RWPE1 (cell line): ENCODE measurements at regions of chr5 and their contacts with region 1.

Region 1: DNA sequence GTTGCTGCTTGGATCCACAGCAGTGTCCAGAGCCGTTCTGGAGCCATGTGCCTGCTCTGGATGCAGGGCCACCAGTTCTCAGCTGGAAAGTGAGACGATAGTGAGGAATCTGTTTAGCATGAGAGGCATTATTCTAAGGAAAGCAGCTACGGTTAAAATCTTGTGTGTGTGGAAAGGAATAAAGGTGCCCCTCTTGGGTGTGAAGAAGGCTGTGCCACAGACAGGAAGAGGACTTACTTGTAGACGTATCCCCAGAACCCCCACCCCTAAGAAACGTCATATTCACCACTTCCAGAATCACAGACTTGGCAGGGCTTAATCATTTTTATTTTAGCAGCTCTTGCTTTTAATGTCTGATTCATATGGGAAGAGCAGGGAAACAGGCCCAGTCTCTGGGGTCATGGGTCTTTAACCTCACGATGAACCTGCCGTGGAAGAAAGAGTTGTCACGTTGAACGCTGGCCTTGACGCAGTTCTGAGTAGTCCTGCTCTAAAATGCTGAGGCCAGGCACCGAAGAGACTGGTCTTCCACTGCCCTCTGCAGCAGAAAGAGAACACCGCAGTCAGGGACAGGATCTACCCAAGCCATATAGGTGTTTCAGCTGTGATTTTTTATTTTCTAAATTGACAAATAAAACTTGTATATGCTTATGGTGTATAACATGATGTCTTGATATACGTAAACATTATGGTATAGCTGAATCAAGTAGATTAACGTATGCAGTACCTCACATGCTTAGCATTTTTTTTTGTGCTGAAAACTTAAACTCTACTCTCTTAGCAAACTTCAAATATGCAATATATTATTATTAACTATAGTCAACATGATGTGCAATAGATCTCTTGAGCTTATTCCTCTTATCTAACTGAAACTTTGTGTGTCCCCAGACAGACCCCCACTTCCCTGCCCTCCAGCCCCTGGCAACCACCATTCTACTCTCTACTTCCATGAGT is 38.8 kb downstream of the CARTPT start:
- DNase-seq: peak; percentile 73
- H3K27ac ChIP-seq: no peak overlapping the region
- CTCF ChIP-seq: peak; percentile 93

Region 2: GRCh38 chr5:71475788-71476384 is 282.0 kb before region 1 on chr5:
- CTCF ChIA-PET with region 1: interaction called, 15 read pairs
- POLR2A ChIA-PET with region 1: no interaction called
- DNase-seq: peak; percentile 57
- H3K27ac ChIP-seq: no peak overlapping the region
- CTCF ChIP-seq: peak; percentile 73

Region 3: DNA sequence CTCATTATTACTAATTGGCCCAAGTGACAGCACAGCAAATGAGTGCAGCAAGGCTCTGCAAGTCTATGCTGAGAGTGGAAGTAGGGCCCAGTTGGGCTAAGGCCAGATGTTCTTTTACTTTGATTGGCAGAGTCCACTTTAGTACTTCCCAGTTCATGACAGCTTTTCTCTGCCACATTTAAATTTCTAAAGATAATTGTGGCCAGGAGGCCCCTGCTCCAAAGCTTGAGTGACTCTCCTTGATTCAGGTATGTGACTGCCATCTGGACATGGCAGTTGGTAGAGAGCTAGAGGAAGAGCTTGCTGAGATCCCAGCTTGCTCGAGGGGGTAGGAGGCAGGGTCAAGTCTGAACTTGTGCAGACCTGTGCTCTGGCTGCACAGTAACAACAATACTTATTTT is 115.3 kb after region 1 on chr5:
- CTCF ChIA-PET with region 1: no interaction called
- POLR2A ChIA-PET with region 1: no interaction called
- DNase-seq: peak; percentile 53
- H3K27ac ChIP-seq: no peak overlapping the region
- CTCF ChIP-seq: no peak

Region 4: GRCh38 chr5:72166070-72166979 is 408.5 kb after region 1 on chr5:
- CTCF ChIA-PET with region 1: no interaction called
- POLR2A ChIA-PET with region 1: no interaction called
- DNase-seq: peak; percentile 70
- H3K27ac ChIP-seq: peak overlapping the region; percentile 91
- CTCF ChIP-seq: no peak